Right ventricle myocardium superior (tissue), 1 donor: ENCODE measurements at regions of chr7 and their contacts with region 1.

Region 1: GRCh38 chr7:121081327-121081936 is 92.9 kb downstream of the CPED1 start:
- DNase-seq: no peak
- ATAC-seq: peak; percentile 73

Region 2: GRCh38 chr7:120987683-120988590 is 93.5 kb before region 1 on chr7:
- intact Hi-C with region 1: loop called (anchors 2 kb)
- DNase-seq: peak; percentile 94
- ATAC-seq: peak; percentile 89

Region 3: DNA sequence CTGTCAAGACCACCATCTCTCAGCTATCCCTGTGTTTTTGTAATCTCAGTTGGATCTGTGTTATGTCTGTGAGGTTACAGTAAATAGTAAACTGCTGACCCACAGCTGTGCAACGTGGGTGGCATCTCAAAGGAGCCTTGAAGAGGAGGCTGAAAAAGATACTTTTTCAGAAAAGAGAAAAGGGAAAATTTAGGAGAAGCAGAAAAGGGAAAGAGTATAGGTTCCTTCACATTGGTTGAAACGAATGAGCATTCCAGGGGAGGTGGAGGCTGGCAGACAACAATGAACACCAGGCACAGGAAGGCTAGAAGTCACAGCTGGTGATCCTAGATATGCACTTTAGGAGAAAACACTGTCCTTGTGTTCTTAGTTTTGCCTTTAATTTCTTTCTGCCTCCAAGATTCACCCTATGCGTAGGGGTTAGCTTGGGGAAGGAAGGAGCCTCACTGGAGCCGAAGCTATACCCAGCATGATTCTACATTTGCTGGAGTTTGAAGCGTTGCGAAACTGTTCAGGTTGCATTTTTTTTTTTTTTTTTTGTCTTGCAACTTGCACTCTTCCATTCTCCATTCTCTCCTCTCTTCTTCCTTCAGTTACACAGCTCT is 74.6 kb before region 1 on chr7:
- intact Hi-C with region 1: no loop called
- DNase-seq: no peak
- ATAC-seq: no peak